ENCODE measurements at regions of chr12 and their contacts with region 1.

Region 1: DNA sequence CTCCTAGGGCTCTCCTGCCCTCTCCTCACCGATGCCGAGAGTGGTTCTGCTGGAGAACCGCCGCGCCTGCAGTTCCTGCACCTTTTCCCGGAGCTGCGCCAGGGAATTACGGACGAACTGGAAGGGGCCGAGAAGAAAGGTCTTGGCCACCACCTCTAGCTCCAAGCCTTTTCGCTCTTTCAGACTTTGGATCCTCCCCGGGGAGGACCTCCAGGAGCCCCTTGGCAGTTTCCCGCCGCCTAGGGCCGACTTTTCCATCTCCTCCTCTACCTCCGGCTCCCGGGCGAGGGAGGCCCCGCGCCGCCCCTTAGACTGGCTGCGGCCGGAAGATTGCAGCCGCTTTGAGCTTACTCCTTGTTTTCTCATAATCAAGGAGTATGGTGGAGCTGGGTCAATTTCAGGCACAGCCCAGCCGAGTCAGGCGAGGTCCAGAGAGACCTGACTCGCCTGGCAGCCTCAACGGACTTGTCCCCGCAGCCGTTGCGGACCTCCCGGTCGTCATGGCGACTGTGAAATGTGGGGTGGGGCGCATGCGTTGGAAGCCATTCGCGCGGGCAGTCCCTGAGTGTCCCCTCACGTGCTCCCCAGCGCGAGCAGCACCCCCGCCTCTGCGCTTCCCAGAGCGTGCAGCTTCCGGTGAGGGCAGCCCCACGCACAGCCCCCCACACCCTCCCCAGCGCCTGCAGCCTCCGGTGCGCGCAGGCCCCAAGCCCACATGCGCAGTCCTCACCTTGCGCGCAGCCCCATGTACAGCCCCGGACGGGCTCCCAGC is at the start of gene DPY19L2:
- DNase-seq: peak; percentile 83 to 92 (median 89)
- ATAC-seq: peak; percentile 95 to 98 (median 98)
- H3K4me3 ChIP-seq: peak within 1 kb of the TSS; percentile 44 to 86 (median 70)
- H3K27ac ChIP-seq: peak within 1 kb of the TSS; percentile 84 to 98 (median 92)
- H3K4me1 ChIP-seq: peaks cover 0 to 8% (median under 1%) of the 10 kb centered on the region in 12 donors
- H3K27me3 ChIP-seq: peaks cover 0 to 9% (median 0%) of the 10 kb centered on the region in 9 donors
- CTCF ChIP-seq: no peak
- POLR2A ChIP-seq: peak in 1 of 2 donors; percentile 31
- total RNA-seq, gene DPY19L2: 22.9 to 55.0 (median 44.6) TPM

Region 2: GRCh38 chr12:63779498-63780481 is 111.6 kb after region 1 on chr12 and contains the start of gene RXYLT1:
- intact Hi-C with region 1: loop called in 1 of 10 experiments (anchors 10 kb)
- DNase-seq: peak; percentile 88 to 93 (median 89)
- ATAC-seq: peak; percentile 99 to 100 (median 100)
- H3K4me3 ChIP-seq: peak within 1 kb of the TSS; percentile 64 to 92 (median 84)
- H3K27ac ChIP-seq: peak within 1 kb of the TSS; percentile 78 to 94 (median 90)
- H3K4me1 ChIP-seq: peaks cover 0 to 19% (median 11%) of the 10 kb centered on the region in 12 donors
- H3K27me3 ChIP-seq: no peaks in the 10 kb centered on the region
- CTCF ChIP-seq: peak in 1 of 12 donors; percentile 5
- POLR2A ChIP-seq: peak in 1 of 2 donors; percentile 88
- total RNA-seq, gene RXYLT1: 16.0 to 28.3 (median 20.7) TPM

Region 3: DNA sequence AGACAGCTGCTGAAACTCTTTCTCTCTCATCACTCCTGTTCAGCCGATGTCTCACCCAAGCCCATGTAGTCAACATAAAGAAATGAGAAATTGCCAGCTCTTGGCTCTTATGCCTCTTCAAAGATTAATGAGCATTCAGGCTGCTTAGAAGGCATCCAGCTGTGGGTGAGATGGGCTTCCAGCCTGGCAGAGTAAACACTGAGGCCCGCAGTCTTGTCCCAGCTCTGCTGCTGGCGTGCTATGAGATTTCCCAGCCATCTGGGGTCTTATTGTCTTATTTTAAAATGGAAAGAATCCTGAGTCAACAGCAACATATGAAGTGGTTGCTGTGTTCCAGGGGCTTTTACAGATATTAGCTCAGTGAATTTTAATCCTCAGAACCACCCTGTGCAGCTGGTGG is 124.1 kb after region 1 on chr12:
- intact Hi-C with region 1: loop called in 4 of 10 experiments (anchors 5 to 10 kb)
- DNase-seq: no peak
- ATAC-seq: no peak
- H3K4me3 ChIP-seq: no peak overlapping the region
- H3K27ac ChIP-seq: no peak overlapping the region
- H3K4me1 ChIP-seq: peaks cover 0 to 3% (median 0%) of the 10 kb centered on the region in 12 donors
- H3K27me3 ChIP-seq: no peaks in the 10 kb centered on the region
- CTCF ChIP-seq: no peak
- POLR2A ChIP-seq: no peak

Region 4: DNA sequence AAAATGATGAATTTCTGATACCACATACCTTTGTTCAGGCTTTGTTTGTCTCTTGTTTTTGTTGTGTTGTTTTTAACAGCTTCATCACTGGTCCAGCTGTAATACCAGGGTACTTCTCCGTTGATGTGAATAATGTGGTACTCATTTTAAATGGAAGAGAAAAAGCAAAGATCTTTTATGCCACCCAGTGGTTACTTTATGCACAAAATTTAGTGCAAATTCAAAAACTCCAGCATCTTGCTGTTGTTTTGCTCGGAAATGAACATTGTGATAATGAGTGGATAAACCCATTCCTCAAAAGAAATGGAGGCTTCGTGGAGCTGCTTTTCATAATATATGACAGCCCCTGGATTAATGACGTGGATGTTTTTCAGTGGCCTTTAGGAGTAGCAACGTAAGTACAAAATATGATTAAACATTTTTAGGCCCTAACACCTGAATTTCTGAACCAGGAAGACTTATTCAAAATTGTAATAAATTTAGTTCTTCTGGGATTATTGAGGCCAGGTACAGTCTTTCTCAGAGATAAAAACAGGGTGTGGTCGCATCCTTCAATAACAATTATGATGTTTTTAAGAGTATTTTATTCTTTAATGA is 133.9 kb after region 1 on chr12:
- intact Hi-C with region 1: loop called in 8 of 10 experiments (anchors 5 to 10 kb)
- DNase-seq: no peak
- ATAC-seq: no peak
- H3K4me3 ChIP-seq: no peak overlapping the region
- H3K27ac ChIP-seq: no peak overlapping the region
- H3K4me1 ChIP-seq: no peaks in the 10 kb centered on the region
- H3K27me3 ChIP-seq: no peaks in the 10 kb centered on the region
- CTCF ChIP-seq: peak; percentile 34 to 71 (median 60)
- POLR2A ChIP-seq: no peak

Measured in heart left ventricle (tissue), 16 donors.